ENCODE measurements at regions of chr6 and their contacts with region 1.

Region 1: DNA sequence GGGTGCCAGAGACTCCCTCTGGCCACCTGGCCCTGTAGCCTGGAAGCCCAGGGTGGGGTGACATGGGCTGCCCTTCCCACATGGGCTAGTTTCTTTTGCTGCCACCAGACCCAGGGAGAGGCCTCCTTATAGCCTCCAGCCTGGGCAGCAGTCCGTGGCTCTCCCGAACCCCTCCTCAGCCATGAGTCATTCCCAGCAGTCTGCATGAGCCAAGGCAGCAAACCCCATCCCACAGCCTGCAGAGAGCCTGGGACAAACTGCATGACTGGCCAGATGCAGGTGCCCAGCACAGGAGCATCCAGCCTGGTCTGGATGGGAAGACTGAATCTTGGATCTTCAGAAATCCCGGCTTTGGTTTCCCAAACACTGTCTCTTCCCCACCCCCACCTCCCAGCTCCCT is 75.7 kb downstream of the MRPL14 start:
- DNase-seq: no peak
- ATAC-seq: no peak; the same call in 2 of the 3 replicates
- H3K4me3 ChIP-seq: no peak overlapping the region
- H3K27ac ChIP-seq: no peak overlapping the region
- H3K4me1 ChIP-seq: peaks cover 57% of the 10 kb centered on the region
- H3K27me3 ChIP-seq: peaks cover 0 to 37% of the 10 kb centered on the region in 2 experiments; a peak in 3 of 5 replicates
- CTCF ChIP-seq: no peak
- EP300 ChIP-seq: no peak
- POLR2A ChIP-seq: no peak
- RAD21 ChIP-seq: no peak

Region 2: DNA sequence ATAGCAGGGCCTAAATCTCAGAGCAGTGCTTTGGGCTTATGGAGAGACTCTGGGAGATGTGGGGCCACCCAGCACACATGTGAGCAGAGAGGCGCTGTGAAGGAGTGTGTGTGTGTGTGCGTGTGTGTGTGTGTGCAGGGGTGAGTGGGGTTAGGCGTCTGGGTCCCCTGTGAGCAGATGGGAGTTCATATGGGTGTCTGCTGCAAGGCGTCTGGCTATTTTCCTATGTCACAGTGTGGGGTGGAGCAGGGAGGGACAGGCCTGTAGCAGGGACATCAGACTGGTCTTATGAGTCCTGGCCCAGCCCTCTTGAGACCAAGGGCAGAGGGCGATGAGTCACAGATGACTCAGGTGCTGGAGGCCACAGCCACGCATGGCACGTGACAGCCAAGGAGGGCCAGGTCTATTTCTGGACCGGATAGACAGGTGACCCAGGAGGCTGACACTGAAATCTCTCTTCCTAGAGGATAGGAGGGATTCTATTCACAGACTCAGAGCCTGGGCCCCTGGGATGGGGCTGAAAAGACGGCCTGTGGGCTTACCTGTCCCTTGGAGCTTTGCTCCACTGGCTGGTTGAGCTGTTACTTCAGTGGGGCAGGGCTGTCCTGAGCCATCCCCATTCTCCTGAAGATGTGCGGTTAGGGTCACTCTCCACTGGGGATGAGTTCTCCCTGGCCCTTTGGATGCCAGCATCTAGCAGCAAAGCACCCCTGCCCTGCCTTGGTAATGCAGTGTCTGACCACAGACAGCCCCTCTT is 252.6 kb before region 1 on chr6:
- CTCF ChIA-PET with region 1: no interaction called
- POLR2A ChIA-PET with region 1: no interaction called
- in situ Hi-C with region 1: no loop called
- intact Hi-C with region 1: loop called (anchors 1 kb)
- DNase-seq: peak; percentile 83
- ATAC-seq: peak; percentile 80
- H3K4me3 ChIP-seq: peak overlapping the region in 1 of 3 experiments; percentile 19; a peak in 1 of 6 replicates
- H3K27ac ChIP-seq: no peak overlapping the region
- H3K4me1 ChIP-seq: peaks cover 84% of the 10 kb centered on the region
- H3K27me3 ChIP-seq: peaks cover 2 to 13% of the 10 kb centered on the region in 2 experiments; a peak in 1 of 5 replicates
- CTCF ChIP-seq: peak; percentile 21; the same call in 1 of the 2 replicates
- EP300 ChIP-seq: peak in 1 of 2 experiments; percentile 67; a peak in 1 of 4 replicates
- POLR2A ChIP-seq: no peak
- RAD21 ChIP-seq: no peak

Measured in HepG2 (cell line).